Right lobe of liver (tissue), 6 donors: ENCODE measurements at regions of chrX and their contacts with region 1.

Region 1: GRCh38 chrX:15664487-15665444 is at the start of gene CLTRN:
- DNase-seq: no peak
- ATAC-seq: peak; percentile 26 to 70 (median 46)
- H3K4me3 ChIP-seq: peak within 1 kb of the TSS in 2 of 3 donors; percentile 0 to 5
- H3K27ac ChIP-seq: no peak within 1 kb of the TSS
- H3K4me1 ChIP-seq: no peaks in the 10 kb centered on the region
- H3K27me3 ChIP-seq: peaks cover 0 to 8% of the 10 kb centered on the region in 2 donors
- CTCF ChIP-seq: no peak
- POLR2A ChIP-seq: no peak
- total RNA-seq, gene CLTRN: 8.8 to 14.0 (median 10.2) TPM

Region 2: DNA sequence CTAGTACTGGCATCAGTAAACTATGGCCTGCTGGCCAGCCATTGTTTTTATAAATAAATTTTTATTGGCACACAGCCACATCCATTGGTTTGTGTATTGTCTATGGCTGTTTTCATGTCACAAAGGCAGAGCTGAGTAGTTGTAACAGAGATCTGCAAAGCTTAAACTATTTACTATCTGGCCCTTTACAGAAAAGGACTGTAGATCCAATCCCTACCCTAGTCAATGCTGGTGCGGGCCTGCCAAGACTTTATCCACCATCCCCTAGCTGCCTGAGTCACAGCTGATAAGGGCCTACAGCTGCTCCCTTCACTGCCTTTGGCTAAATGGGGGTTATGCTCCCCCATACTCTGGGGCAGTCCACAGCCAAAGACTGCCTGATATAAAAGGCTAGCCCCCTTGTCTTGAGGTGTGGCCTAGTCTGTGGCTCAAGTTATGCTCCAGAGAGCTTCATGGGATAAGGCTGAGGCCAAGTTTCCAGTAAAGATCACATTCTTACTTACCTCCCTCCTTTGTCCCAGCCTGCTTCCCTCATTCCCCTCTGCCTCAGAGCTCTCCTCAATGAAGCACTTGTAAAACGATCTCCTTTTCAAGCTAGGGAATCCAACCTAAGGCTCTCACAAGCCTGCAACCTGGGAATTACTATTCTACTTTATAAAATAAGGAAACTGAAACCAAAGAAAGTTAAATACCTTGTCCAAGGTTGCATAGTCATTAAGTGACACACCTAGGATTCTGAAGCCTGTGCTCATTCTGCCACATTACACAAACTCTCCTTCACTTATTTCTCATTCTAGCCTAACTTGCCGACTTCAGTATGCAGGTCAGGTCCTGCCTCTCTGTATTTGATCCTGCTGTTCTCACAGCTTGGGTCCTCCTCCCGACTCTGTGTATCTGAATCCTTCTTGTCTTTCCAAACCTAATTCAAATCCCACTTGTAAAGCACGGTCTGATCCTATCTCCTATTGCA is 84.7 kb before region 1 on chrX:
- intact Hi-C with region 1: loop called in 1 of 2 experiments (anchors 5 kb)
- DNase-seq: no peak
- ATAC-seq: no peak
- H3K4me3 ChIP-seq: no peak overlapping the region
- H3K27ac ChIP-seq: no peak overlapping the region
- H3K4me1 ChIP-seq: no peaks in the 10 kb centered on the region
- H3K27me3 ChIP-seq: no peaks in the 10 kb centered on the region
- CTCF ChIP-seq: no peak
- POLR2A ChIP-seq: no peak

Region 3: DNA sequence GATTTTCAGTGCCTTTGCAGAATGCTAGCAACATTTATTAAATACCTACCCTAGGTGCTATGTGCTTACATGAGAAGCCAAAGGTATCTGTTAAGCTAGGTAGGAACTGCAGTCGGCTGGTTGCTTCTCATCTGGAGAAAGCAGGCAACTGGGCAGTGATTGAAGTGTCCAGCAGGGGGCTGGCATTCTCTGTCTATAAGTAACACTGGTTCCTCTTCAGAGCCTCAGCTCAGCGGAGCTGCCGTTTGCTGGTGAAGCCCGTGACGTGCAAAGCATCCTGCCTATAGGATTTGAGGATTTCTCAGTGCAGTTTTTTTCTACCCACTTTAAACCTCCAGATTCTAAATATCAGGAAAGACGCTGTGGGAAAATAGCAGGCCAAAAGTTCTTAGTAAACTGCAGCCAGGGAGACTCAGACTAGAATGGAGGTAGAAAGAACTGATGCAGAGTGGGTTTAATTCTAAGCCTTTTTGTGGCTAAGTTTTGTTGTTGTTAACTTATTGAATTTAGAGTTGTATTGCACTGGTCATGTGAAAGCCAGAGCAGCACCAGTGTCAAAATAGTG is 458.5 kb after region 1 on chrX and contains the start of gene GRPR:
- intact Hi-C with region 1: no loop called
- DNase-seq: peak; percentile 64 to 81 (median 77)
- ATAC-seq: peak; percentile 93 to 96 (median 96)
- H3K4me3 ChIP-seq: no peak within 1 kb of the TSS
- H3K27ac ChIP-seq: no peak within 1 kb of the TSS
- H3K4me1 ChIP-seq: peaks cover 0 to 13% (median 4%) of the 10 kb centered on the region in 4 donors
- H3K27me3 ChIP-seq: peaks cover 0 to 19% of the 10 kb centered on the region in 2 donors
- CTCF ChIP-seq: peak; percentile 68 to 89 (median 79)
- POLR2A ChIP-seq: no peak
- total RNA-seq, gene GRPR: not detected